Heart right ventricle (tissue), 16 donors: ENCODE measurements at regions of chr3 and their contacts with region 1.

Region 1: GRCh38 chr3:106609666-106610301 is 741.0 kb upstream of the CBLB start:
- DNase-seq: peak in 1 of 2 donors; percentile 65
- ATAC-seq: peak in 7 of 8 donors; percentile 65 to 90 (median 84)
- H3K4me3 ChIP-seq: no peak overlapping the region
- H3K27ac ChIP-seq: no peak overlapping the region
- H3K4me1 ChIP-seq: peaks cover 0 to 4% (median 3%) of the 10 kb centered on the region in 9 donors
- H3K27me3 ChIP-seq: no peaks in the 10 kb centered on the region
- CTCF ChIP-seq: peak; percentile 72 to 92 (median 88)

Region 2: GRCh38 chr3:105527949-105528348 is 1081.8 kb before region 1 on chr3:
- intact Hi-C with region 1: loop called in 1 of 10 experiments (anchors 10 kb)
- DNase-seq: no peak
- ATAC-seq: no peak
- H3K4me3 ChIP-seq: no peak overlapping the region
- H3K27ac ChIP-seq: no peak overlapping the region
- H3K4me1 ChIP-seq: no peaks in the 10 kb centered on the region
- H3K27me3 ChIP-seq: no peaks in the 10 kb centered on the region
- CTCF ChIP-seq: no peak

Region 3: DNA sequence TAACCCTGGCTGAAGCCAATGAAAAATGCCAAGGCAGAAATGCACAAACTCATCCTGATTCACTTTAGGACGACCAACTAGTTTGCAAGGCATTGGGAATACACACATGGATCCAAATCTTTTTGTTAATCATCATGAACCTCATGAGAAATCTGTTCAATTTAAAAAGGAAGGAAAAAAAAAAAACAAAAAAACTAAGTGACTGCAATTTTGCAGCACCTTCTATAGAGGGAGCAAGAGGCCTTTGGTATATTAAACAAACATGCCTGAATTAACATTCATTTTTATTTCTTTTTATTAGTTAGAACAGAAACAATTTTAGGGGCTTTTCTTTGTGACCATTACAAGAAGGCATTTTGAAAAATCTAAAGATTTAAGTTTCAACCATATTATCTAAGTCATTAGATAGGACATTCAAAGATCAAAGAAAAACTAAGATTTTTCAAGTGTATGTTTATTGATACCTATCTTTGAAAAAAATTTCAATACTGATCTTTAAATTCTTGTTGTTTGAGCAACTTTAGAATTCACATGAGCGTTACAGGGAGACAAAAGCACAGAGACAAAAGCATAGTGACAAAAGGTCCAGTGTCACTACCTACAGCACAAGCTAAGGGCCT is 923.4 kb before region 1 on chr3:
- intact Hi-C with region 1: loop called in 8 of 10 experiments (anchors 2 to 10 kb)
- DNase-seq: no peak
- ATAC-seq: peak in 2 of 8 donors; percentile 42 to 49
- H3K4me3 ChIP-seq: no peak overlapping the region
- H3K27ac ChIP-seq: peak overlapping the region in 2 of 10 donors; percentile 10 to 28
- H3K4me1 ChIP-seq: peaks cover 0 to 36% (median 15%) of the 10 kb centered on the region in 9 donors
- H3K27me3 ChIP-seq: no peaks in the 10 kb centered on the region
- CTCF ChIP-seq: peak; percentile 63 to 89 (median 79)

Region 4: GRCh38 chr3:106355873-106356272 is 253.9 kb before region 1 on chr3:
- intact Hi-C with region 1: no loop called
- DNase-seq: no peak
- ATAC-seq: no peak
- H3K4me3 ChIP-seq: no peak overlapping the region
- H3K27ac ChIP-seq: no peak overlapping the region
- H3K4me1 ChIP-seq: no peaks in the 10 kb centered on the region
- H3K27me3 ChIP-seq: no peaks in the 10 kb centered on the region
- CTCF ChIP-seq: no peak

Region 5: DNA sequence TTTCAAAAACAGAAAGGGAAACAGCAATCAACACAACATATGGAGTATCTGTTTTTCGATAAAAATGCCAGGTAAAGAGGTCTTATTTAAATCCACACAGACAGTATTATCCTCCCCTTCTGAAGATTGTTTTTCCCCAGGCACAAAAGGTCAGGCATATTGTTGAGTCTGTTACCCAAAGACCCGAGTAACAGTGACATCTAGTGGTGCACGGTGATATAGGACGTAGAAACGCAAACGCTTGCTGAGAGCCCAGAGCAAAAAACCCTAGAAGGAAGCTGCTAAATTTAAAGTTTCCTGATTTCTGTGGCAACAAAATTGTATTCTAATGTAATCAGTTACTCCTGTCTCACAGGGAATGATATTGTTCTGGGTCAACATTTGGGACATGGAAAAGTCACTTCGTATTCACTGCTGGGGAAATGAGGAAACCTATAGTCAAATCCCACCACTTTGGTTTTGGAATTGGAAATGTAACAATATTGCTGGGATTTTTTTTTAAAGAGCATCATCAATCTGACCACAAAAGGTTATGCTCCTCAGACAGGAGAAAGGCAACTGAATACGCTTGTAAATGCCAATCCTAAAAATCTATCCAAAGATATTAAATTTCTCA is 454.8 kb after region 1 on chr3:
- intact Hi-C with region 1: loop called in 2 of 10 experiments (anchors 10 kb)
- DNase-seq: peak in 1 of 2 donors; percentile 79
- ATAC-seq: peak; percentile 69 to 91 (median 88)
- H3K4me3 ChIP-seq: no peak overlapping the region
- H3K27ac ChIP-seq: peak overlapping the region in 2 of 10 donors; percentile 4 to 41
- H3K4me1 ChIP-seq: peaks cover 0 to 46% (median 29%) of the 10 kb centered on the region in 9 donors
- H3K27me3 ChIP-seq: no peaks in the 10 kb centered on the region
- CTCF ChIP-seq: peak; percentile 66 to 89 (median 84)